Upper lobe of right lung (tissue), 1 donor: ENCODE measurements at regions of chr22 and their contacts with region 1.

Region 1: GRCh38 chr22:45640291-45640940 is 31.2 kb upstream of the ATXN10 start:
- DNase-seq: peak; percentile 18
- ATAC-seq: no peak
- H3K4me3 ChIP-seq: no peak overlapping the region
- H3K27ac ChIP-seq: no peak overlapping the region
- H3K4me1 ChIP-seq: peaks cover 18% of the 10 kb centered on the region
- H3K27me3 ChIP-seq: peaks cover 3% of the 10 kb centered on the region
- CTCF ChIP-seq: no peak

Region 2: GRCh38 chr22:45970705-45971407 is 330.4 kb after region 1 on chr22:
- intact Hi-C with region 1: loop called (anchors 5 kb)
- DNase-seq: no peak
- ATAC-seq: no peak
- H3K4me3 ChIP-seq: no peak overlapping the region
- H3K27ac ChIP-seq: no peak overlapping the region
- H3K4me1 ChIP-seq: peaks cover 15% of the 10 kb centered on the region
- H3K27me3 ChIP-seq: peaks cover 84% of the 10 kb centered on the region
- CTCF ChIP-seq: no peak